Breast epithelium (tissue), 4 donors: ENCODE measurements at regions of chr2 and their contacts with region 1.

Region 1: GRCh38 chr2:237030382-237030781 is 55.3 kb upstream of the COPS8 start:
- DNase-seq: no peak
- H3K4me3 ChIP-seq: no peak overlapping the region
- H3K27ac ChIP-seq: no peak overlapping the region
- H3K4me1 ChIP-seq: no peaks in the 10 kb centered on the region
- H3K27me3 ChIP-seq: no peaks in the 10 kb centered on the region
- CTCF ChIP-seq: no peak
- POLR2A ChIP-seq: no peak

Region 2: DNA sequence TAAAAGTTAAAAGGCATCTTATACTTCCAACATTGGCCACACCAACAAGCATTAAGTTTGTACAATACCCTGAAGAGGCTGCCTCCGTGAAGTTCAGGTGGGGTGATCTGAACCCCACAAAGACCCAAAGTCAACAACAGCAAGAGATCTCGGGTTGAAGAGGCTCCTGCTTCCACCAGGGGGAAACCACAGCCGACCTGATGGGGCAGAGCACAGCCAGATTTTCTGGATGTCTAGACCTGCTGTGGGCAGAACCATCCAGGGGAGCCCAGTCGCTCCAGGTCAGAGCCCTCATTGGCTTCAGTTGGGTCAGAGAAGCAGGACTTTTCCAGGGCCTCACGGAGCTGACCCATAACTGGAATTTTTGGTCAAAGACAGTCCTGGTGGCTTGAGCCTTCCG is 527.3 kb before region 1 on chr2:
- intact Hi-C with region 1: loop called (anchors 5 kb)
- DNase-seq: no peak
- H3K4me3 ChIP-seq: no peak overlapping the region
- H3K27ac ChIP-seq: no peak overlapping the region
- H3K4me1 ChIP-seq: peaks cover 0 to 8% of the 10 kb centered on the region in 2 donors
- H3K27me3 ChIP-seq: no peaks in the 10 kb centered on the region
- CTCF ChIP-seq: no peak
- POLR2A ChIP-seq: no peak